Tibial artery (tissue), 4 donors: ENCODE measurements at regions of chr9 and their contacts with region 1.

Region 1: DNA sequence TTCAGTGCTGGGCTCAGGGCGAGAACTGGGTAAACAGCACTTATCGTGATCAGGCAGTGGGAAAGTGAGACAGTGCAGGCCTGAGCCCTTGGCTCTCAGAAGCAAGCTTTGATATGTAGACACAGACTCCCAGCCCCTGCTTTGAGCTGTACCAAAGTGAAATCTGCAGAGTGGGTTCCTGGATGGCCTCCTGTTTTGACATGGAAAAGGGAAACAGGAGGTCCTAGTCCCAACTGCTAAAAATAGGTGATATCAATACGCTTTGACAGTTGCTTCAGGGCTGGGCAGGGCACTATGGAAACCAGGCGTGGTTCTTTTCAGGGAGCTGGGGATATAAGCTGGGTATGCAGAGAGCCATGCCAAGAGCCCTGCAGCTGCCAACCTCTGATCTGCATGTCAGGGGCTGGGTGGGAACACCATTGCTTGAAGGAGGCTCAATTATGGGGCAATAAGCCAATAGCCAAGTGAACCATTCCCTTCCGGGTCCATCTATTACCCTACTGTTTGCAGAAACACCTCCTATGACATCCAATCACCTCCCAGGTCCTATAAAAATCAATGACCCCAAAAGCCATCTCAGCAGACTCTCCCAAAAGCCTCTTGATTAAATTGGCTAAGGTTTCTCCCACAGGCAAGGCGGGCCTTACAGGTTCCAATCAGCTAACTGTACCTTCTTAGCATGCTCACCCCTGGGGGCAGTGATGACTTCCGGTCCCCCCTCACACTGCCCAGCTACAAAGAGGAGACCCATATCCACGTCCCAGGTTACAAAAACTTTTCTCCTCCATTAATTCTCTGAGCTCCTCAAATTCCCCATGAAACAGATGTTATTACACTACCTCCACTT is 45.8 kb downstream of the EPB41L4B start:
- DNase-seq: no peak
- H3K4me3 ChIP-seq: no peak overlapping the region
- H3K27ac ChIP-seq: no peak overlapping the region
- H3K4me1 ChIP-seq: no peaks in the 10 kb centered on the region
- H3K27me3 ChIP-seq: peaks cover 0 to 5% of the 10 kb centered on the region in 2 donors
- CTCF ChIP-seq: no peak

Region 2: GRCh38 chr9:107778661-107779060 is 1496.4 kb before region 1 on chr9:
- intact Hi-C with region 1: loop called (anchors 10 kb)
- DNase-seq: no peak
- H3K4me3 ChIP-seq: no peak overlapping the region
- H3K27ac ChIP-seq: no peak overlapping the region
- H3K4me1 ChIP-seq: no peaks in the 10 kb centered on the region
- H3K27me3 ChIP-seq: no peaks in the 10 kb centered on the region
- CTCF ChIP-seq: no peak